Activated B cell treated with CpG ODN at 0.5 μM for 24 hours (primary cell): ENCODE measurements at regions of chr1 and their contacts with region 1.

Region 1: DNA sequence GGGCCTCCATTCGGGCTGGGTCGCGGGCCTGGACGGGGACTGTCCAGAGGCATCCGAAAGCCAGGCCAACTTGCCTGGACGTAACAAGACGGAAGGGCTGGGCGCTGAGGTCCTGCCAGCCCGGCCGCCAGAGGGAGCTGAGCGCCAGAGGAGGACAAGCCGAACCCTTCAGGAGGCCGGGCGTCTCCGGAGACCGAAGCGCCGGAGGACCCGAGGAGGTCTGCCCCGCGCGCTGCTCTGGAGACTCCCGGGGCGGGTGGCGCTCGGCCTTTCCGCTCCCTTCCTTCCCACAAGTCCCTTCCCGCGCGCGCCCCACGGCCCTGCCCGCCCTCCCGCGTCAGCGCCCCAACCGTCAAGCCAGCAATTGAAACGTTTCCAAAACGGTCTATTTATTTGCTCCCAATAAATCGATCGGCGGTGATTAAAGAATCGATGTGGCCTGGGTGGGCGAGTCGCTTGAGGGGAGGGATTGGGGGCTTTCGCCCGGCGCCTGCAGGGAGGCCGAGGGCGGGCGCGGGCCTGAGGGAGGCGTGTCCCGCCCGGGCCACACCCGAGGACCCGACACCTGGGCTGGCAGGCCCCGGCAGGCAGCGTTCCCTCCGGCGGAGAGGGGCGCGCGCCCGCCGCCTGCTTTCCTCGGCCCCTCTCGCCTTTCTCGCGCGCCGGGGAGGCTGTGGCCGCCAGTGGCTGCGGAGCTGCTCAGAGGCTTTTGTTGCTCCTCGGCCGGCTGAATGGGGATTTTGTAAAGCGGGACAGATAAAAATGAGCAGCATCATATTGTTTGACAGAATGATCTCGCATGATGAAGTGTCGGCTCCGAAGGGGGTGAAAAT is 5.2 kb upstream of the FOXD3 start:
- DNase-seq: peak; percentile 40
- ATAC-seq: peak; percentile 66
- H3K4me3 Mint-ChIP-seq: peak overlapping the region; percentile 69
- H3K27ac Mint-ChIP-seq: peak overlapping the region; percentile 18
- H3K4me1 Mint-ChIP-seq: peaks cover 23% of the 10 kb centered on the region
- H3K27me3 Mint-ChIP-seq: peaks cover 60% of the 10 kb centered on the region
- CTCF ChIP-seq: no peak

Region 2: DNA sequence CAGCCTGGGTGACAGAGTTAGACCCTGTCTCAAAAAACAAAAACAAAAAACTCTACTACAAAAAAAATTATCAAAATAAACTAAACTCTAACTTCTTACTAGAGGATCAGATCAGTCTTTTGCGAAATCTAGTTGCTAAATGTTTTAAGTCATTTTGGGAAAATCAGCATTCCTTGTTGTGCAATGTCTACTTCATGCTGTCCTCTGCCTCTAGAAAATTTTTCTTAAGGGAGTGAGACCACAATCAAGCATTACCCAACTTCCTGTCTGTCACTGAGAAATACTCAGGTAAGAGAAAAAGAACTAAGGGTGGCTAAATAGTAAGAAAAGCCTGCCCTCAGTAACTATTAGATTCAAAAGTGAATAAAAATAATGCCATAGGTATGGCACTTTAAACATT is 62.0 kb before region 1 on chr1:
- CTCF ChIA-PET with region 1: no interaction called
- POLR2A ChIA-PET with region 1: no interaction called
- intact Hi-C with region 1: no loop called
- DNase-seq: no peak
- ATAC-seq: no peak
- H3K4me3 Mint-ChIP-seq: no peak overlapping the region
- H3K27ac Mint-ChIP-seq: no peak overlapping the region
- H3K4me1 Mint-ChIP-seq: no peaks in the 10 kb centered on the region
- H3K27me3 Mint-ChIP-seq: peaks cover 5% of the 10 kb centered on the region
- CTCF ChIP-seq: no peak

Region 3: DNA sequence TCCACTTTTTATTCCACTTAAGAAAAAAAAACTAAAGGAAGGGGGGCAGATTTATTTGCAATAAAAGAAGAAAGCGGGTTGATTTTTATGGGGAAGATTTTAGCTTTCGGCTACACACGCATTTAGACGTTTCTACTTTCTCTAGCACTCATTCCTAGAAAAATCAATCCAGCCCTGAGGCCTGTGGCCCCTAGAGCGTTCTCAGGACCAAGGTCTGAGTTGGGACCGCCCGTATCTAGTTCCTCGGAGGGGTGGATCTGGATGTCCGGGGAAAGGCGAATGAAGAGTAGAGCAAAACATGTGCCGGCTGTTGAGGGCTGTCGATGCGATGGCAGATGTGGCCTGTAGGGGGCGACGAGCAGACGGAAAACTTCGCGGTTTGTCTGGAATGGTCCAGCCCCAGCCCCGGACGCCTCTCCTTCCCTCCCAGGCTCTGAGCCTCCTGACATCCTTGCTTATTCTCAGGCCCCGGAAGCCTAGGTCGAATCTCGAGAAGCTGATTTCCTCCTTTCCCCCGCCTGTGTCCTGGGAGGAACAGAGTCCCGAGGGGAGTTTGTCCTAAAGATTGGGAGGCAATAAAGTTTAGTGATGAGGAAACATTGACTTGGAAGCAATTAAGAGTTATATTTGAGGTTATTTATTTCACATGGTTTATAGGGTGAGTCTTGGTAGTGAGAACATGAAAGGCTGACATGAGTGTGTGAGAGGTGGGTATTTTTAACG is 10.4 kb after region 1 on chr1:
- CTCF ChIA-PET with region 1: interaction called, 4 read pairs
- POLR2A ChIA-PET with region 1: interaction called, 3 read pairs
- intact Hi-C with region 1: loop called (anchors 1 kb)
- DNase-seq: peak; percentile 19
- ATAC-seq: no peak
- H3K4me3 Mint-ChIP-seq: no peak overlapping the region
- H3K27ac Mint-ChIP-seq: peak overlapping the region; percentile 59
- H3K4me1 Mint-ChIP-seq: peaks cover 20% of the 10 kb centered on the region
- H3K27me3 Mint-ChIP-seq: peaks cover 54% of the 10 kb centered on the region
- CTCF ChIP-seq: no peak

Region 4: DNA sequence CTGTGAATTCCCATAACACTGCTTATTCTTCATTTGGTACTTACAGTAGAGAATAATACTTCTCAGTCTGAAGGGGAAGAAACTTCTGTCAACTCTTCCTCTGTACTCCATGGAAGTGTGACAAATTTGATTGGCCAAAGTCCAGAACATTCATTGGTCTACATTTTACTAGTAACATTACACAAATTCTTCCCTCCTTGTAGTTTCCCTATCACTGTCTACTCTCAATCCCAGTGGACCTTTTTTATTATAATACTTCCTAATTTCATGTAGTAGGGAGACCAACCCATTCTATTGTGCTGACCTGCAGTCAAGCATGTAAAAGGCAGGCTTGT is 124.9 kb after region 1 on chr1:
- CTCF ChIA-PET with region 1: interaction called, 3 read pairs
- POLR2A ChIA-PET with region 1: no interaction called
- intact Hi-C with region 1: loop called (anchors 2 kb)
- DNase-seq: no peak
- ATAC-seq: no peak
- H3K4me3 Mint-ChIP-seq: no peak overlapping the region
- H3K27ac Mint-ChIP-seq: no peak overlapping the region
- H3K4me1 Mint-ChIP-seq: peaks cover 7% of the 10 kb centered on the region
- H3K27me3 Mint-ChIP-seq: no peaks in the 10 kb centered on the region
- CTCF ChIP-seq: no peak

Region 5: GRCh38 chr1:63537940-63538339 is 220.7 kb after region 1 on chr1:
- CTCF ChIA-PET with region 1: interaction called, 3 read pairs
- POLR2A ChIA-PET with region 1: no interaction called
- intact Hi-C with region 1: loop called (anchors 2 kb)
- DNase-seq: no peak
- ATAC-seq: no peak
- H3K4me3 Mint-ChIP-seq: no peak overlapping the region
- H3K27ac Mint-ChIP-seq: no peak overlapping the region
- H3K4me1 Mint-ChIP-seq: no peaks in the 10 kb centered on the region
- H3K27me3 Mint-ChIP-seq: no peaks in the 10 kb centered on the region
- CTCF ChIP-seq: no peak